ENCODE measurements at regions of chr15 and their contacts with region 1.

Region 1: DNA sequence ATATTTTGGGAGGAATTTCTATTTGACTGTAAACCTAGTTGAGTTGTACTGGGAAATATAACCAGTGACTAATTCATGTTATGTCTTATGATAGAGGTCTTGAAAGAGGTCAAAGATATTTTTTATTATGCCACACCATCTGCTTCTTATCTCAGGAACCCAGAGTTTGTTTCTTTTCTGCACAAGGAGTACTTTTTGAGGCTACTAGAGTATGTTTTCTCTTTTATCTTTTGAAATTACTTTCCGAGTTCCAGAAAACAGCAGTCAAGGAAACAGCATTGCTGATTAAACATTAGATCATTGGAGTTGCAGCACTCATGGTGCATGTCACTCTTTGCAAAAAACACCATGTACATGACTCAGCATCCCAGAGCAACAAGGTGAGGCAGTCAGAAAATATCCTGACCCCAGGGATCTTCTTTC is 645.8 kb upstream of the NR2F2 start:
- DNase-seq: no peak
- H3K4me3 ChIP-seq: no peak overlapping the region
- H3K27ac ChIP-seq: no peak overlapping the region
- H3K4me1 ChIP-seq: no peaks in the 10 kb centered on the region
- H3K27me3 ChIP-seq: no peaks in the 10 kb centered on the region
- CTCF ChIP-seq: no peak

Region 2: GRCh38 chr15:95536638-95537037 is 148.1 kb before region 1 on chr15:
- CTCF ChIA-PET with region 1: no interaction called
- POLR2A ChIA-PET with region 1: no interaction called
- intact Hi-C with region 1: no loop called
- DNase-seq: no peak
- H3K4me3 ChIP-seq: no peak overlapping the region
- H3K27ac ChIP-seq: no peak overlapping the region
- H3K4me1 ChIP-seq: no peaks in the 10 kb centered on the region
- H3K27me3 ChIP-seq: no peaks in the 10 kb centered on the region
- CTCF ChIP-seq: no peak

Region 3: GRCh38 chr15:95626501-95627361 is 58.0 kb before region 1 on chr15:
- CTCF ChIA-PET with region 1: no interaction called
- POLR2A ChIA-PET with region 1: no interaction called
- intact Hi-C with region 1: no loop called
- DNase-seq: peak; percentile 78
- H3K4me3 ChIP-seq: no peak overlapping the region
- H3K27ac ChIP-seq: peak overlapping the region; percentile 3
- H3K4me1 ChIP-seq: peaks cover 23% of the 10 kb centered on the region
- H3K27me3 ChIP-seq: no peaks in the 10 kb centered on the region
- CTCF ChIP-seq: no peak

Region 4: GRCh38 chr15:95647531-95648277 is 37.0 kb before region 1 on chr15:
- CTCF ChIA-PET with region 1: no interaction called
- POLR2A ChIA-PET with region 1: no interaction called
- intact Hi-C with region 1: loop called (anchors 1 kb)
- DNase-seq: no peak
- H3K4me3 ChIP-seq: no peak overlapping the region
- H3K27ac ChIP-seq: no peak overlapping the region
- H3K4me1 ChIP-seq: peaks cover 9% of the 10 kb centered on the region
- H3K27me3 ChIP-seq: no peaks in the 10 kb centered on the region
- CTCF ChIP-seq: no peak

Region 5: DNA sequence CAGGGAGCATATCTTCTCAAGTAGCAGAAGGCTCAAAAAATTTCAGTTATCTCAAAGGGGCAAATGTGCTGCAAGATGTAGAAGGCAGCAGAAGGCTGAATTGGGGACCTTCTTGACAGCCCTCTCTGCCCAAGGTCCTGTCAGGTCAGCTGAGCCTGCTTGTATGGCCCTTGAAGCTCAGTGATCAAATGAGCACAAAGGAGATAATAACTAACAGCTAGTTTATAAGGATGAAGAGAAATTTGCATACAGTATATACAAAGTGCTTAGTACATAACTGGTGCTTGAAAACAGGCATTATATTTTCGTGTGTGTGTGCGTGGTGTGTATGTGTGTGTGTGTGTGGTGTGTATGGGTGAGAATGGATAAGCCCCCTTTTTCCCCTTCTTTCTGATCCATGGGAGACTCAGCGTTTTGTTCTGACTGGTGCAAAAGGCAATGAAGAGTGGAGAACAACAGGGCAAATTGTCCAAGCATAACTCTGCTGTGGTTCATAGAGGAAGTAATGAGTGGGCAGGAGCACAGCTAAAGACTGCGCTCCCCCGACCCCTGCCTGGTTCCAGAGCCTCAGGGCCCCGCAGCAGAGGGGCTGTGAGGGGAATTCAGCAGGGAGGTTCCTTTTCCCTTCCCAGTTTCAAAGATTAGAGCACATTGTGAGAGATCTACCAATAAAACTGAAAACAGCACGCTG is 289.0 kb after region 1 on chr15:
- CTCF ChIA-PET with region 1: no interaction called
- POLR2A ChIA-PET with region 1: no interaction called
- intact Hi-C with region 1: no loop called
- DNase-seq: no peak
- H3K4me3 ChIP-seq: no peak overlapping the region
- H3K27ac ChIP-seq: no peak overlapping the region
- H3K4me1 ChIP-seq: no peaks in the 10 kb centered on the region
- H3K27me3 ChIP-seq: no peaks in the 10 kb centered on the region
- CTCF ChIP-seq: no peak